Calu3 (cell line): ENCODE measurements at regions of chr10 and their contacts with region 1.

Region 1: DNA sequence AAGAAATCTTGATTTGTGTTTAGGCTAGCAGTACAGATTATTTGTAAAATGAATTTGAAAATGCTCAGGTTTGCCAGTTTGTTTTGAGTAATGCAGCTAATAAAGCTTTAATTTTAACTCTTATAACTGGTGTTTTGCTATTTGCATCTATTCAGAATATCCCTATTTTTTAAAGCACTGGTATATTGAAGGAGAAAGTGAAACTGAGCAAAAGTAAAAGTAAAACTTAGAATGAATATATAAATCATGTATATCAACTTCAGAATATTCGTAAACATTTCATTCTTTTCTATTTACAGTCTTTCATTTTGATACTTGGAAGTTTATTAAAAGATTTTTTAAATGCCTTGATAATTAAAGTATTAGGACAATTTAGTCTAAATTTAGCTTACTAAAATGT is 26.2 kb downstream of the TASOR2 start:
- DNase-seq: no peak
- H3K4me3 Mint-ChIP-seq: no peak overlapping the region
- H3K27ac Mint-ChIP-seq: no peak overlapping the region
- H3K4me1 Mint-ChIP-seq: peaks cover 39% of the 10 kb centered on the region
- H3K27me3 Mint-ChIP-seq: no peaks in the 10 kb centered on the region
- CTCF ChIP-seq: no peak

Region 2: DNA sequence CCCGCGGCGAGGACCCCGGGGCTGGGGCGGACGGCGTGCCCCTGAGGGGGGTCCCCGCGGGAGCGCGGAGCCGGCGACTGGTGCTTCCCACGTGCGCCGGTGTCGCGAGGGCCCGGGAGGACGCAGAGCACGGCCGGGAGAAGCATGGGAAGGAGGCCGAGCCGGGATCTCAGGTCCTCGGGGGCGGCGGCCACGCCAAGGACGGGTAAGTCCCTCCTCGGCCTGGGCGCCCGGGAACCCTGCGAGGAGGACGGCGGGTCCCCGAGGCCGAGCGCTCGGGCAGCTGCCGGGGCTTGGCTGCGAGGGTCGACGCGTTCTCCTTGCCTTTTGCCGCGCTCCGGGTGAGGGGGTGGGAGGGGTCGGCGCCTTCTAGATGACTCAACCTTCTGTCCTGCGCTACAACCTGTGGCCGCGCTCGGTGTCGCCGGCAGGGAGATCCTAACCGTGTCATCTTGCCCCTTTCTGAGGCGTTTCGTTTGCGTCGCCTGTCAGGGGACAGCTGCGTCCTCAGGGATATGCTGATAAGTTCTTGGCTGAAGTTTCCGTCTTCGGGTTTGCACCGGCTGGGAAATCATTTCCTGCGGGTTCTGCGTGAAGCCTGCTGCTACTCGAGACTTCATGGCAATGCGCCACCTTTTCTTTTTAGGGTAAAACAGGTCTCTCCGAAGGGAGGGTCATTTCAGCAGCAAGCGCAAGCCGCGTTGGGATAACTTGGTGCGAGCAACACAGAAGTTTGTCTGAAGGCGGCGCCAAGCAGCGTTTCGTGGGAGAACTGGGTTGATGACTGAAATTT is 25.7 kb before region 1 on chr10:
- CTCF ChIA-PET with region 1: interaction called, 4 read pairs
- intact Hi-C with region 1: loop called (anchors 1 kb)
- DNase-seq: peak; percentile 64
- H3K4me3 Mint-ChIP-seq: peak overlapping the region; percentile 84
- H3K27ac Mint-ChIP-seq: peak overlapping the region; percentile 90
- H3K4me1 Mint-ChIP-seq: peaks cover 18% of the 10 kb centered on the region
- H3K27me3 Mint-ChIP-seq: no peaks in the 10 kb centered on the region
- CTCF ChIP-seq: peak; percentile 11

Region 3: DNA sequence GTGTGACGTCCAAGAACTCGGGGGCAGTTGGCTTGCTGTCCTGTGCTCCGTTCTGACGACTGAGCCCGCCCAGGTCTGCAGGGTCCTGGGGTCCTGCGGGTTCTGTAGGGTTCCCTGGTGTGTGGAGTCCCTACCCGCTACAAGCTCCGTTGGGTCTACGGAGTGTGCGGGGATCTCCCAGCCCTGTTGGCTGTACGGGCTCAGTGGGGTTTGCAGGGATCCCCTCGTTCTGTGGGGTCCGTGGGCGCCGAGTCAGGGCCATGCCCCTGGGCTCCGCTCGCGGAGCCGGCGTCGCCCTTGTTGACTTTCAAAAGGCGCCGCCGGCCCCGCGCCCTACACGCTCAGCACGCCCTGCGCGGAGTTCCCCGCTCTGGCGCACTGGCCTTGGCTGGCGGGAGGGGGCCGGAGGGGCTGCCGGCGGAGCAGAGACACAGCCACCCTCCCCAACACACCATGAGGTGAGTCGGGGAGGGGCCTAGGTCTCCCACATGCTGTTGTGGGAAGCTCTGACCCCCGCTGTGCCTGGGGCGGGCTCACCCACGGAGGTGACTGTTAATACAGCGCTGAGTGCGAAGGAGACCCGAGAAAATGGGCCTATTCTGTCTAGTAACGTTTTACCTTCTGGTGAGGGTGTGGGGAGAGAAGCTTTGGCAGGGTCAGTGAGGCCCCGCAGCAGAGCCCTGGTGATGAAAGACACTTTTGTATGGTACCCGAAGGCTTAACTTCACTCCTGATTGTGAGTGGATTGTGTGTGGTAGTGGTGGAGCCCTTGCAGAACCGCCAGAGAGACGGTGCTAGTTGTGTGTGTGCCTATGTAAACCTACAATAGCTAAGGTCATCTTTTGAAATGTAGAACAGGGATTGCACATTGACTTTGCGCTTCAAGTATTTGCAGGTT is 18.1 kb before region 1 on chr10:
- CTCF ChIA-PET with region 1: interaction called, 4 read pairs
- intact Hi-C with region 1: loop called (anchors 2 kb)
- DNase-seq: peak; percentile 49
- H3K4me3 Mint-ChIP-seq: peak overlapping the region; percentile 72
- H3K27ac Mint-ChIP-seq: no peak overlapping the region
- H3K4me1 Mint-ChIP-seq: peaks cover 19% of the 10 kb centered on the region
- H3K27me3 Mint-ChIP-seq: no peaks in the 10 kb centered on the region
- CTCF ChIP-seq: no peak